Vagina (tissue), 2 donors: ENCODE measurements at regions of chr2 and their contacts with region 1.

Region 1: GRCh38 chr2:229087843-229088511 is 183.1 kb downstream of the PID1 start:
- DNase-seq: no peak
- H3K4me3 ChIP-seq: no peak overlapping the region
- H3K27ac ChIP-seq: no peak overlapping the region
- H3K4me1 ChIP-seq: peaks cover 7% of the 10 kb centered on the region
- H3K27me3 ChIP-seq: no peaks in the 10 kb centered on the region
- CTCF ChIP-seq: no peak
- POLR2A ChIP-seq: no peak

Region 2: DNA sequence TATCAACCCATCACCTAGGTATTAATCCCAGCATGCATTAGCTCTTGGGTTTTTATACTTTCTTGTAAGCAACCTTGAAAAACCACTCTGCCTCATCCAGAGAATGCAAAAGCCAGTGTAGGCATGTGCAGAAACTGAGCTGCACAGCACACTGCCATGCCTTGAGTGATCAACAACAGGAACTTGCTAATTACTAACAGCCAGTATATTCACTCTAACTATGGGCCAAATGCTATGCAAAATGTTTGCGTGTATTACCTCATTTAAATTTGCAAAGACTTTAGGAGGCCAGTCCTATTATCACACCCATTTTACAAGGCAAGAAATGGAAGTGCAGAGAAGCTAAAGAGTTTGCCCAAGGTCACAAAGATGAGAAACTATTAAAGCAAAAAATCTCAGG is 13.3 kb after region 1 on chr2:
- intact Hi-C with region 1: loop called (anchors 2 kb)
- DNase-seq: no peak
- H3K4me3 ChIP-seq: no peak overlapping the region
- H3K27ac ChIP-seq: no peak overlapping the region
- H3K4me1 ChIP-seq: no peaks in the 10 kb centered on the region
- H3K27me3 ChIP-seq: no peaks in the 10 kb centered on the region
- CTCF ChIP-seq: no peak
- POLR2A ChIP-seq: no peak